Left cardiac atrium (tissue), 4 donors: ENCODE measurements at regions of chr17 and their contacts with region 1.

Region 1: GRCh38 chr17:31156326-31156725 is 61.5 kb downstream of the NF1 start:
- DNase-seq: no peak
- ATAC-seq: no peak

Region 2: GRCh38 chr17:31048775-31049174 is 107.6 kb before region 1 on chr17:
- intact Hi-C with region 1: no loop called
- DNase-seq: no peak
- ATAC-seq: no peak

Region 3: GRCh38 chr17:31100840-31101459 is 55.4 kb before region 1 on chr17:
- intact Hi-C with region 1: loop called in 1 of 2 experiments (anchors 10 kb)
- DNase-seq: no peak
- ATAC-seq: no peak